ENCODE measurements at regions of chr3 and their contacts with region 1.

Region 1: GRCh38 chr3:187319699-187320302 is 28.3 kb upstream of the MASP1 start:
- DNase-seq: peak; percentile 8 to 66 (median 39)
- ATAC-seq: peak; percentile 84
- H3K4me3 ChIP-seq: no peak overlapping the region
- H3K4me3 Mint-ChIP-seq: no peak overlapping the region
- H3K27ac ChIP-seq: no peak overlapping the region
- H3K27ac Mint-ChIP-seq: no peak overlapping the region
- H3K4me1 ChIP-seq: peaks cover 6% of the 10 kb centered on the region
- H3K4me1 Mint-ChIP-seq: peaks cover 13% of the 10 kb centered on the region
- H3K27me3 ChIP-seq: peaks cover 4 to 5% of the 10 kb centered on the region in 2 experiments
- H3K27me3 Mint-ChIP-seq: peaks cover 43% of the 10 kb centered on the region
- CTCF ChIP-seq: peak; percentile 54

Region 2: GRCh38 chr3:187336322-187336721 is 16.5 kb after region 1 on chr3:
- CTCF ChIA-PET with region 1: interaction called, 45 read pairs
- POLR2A ChIA-PET with region 1: no interaction called
- intact Hi-C with region 1: no loop called
- DNase-seq: no peak
- ATAC-seq: no peak
- H3K4me3 ChIP-seq: no peak overlapping the region
- H3K4me3 Mint-ChIP-seq: no peak overlapping the region
- H3K27ac ChIP-seq: no peak overlapping the region
- H3K27ac Mint-ChIP-seq: no peak overlapping the region
- H3K4me1 ChIP-seq: no peaks in the 10 kb centered on the region
- H3K4me1 Mint-ChIP-seq: no peaks in the 10 kb centered on the region
- H3K27me3 ChIP-seq: no peaks in the 10 kb centered on the region
- H3K27me3 Mint-ChIP-seq: peaks cover 13% of the 10 kb centered on the region
- CTCF ChIP-seq: no peak

Region 3: DNA sequence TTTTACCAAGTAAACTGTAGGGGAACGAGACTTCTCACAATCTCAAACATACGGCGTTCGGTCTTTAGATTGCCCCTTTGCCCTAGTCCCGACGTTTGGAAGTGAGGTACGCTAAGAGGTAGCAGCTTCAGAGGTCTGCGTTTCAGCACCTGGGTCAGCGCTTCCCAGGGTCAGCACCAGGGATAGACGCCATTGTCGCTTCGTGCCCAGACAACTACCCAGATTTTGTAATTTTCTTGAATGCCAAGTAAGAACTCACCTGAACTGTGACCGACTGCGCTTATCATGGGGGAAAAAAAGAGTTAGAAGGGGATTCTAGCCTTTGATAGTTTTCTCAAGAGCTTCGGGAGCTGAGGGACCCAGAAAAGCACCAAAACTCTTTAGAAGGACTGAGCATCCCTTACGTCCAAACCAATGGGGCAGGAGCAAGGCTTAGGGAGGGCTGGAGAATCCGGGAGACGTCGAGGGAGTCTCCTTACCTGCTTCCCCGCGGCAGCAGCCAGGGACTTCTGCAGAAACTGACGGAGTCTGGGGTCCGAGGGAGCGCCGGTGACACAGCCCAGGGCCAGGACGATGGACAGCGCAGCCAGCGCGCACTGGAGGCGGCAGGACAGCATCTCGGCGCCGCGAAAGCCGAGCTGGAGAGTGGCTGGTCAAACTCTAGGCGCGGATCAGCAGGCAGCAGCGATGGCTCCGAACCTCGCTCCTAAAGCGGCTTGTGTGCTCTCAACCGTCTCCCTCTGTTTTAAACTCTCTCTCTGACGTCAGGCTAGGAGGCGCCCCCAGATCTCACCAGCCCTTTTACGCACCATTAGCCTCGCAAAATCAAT is 350.1 kb after region 1 on chr3 and contains the start of gene SST:
- CTCF ChIA-PET with region 1: interaction called, 421 read pairs
- POLR2A ChIA-PET with region 1: no interaction called
- intact Hi-C with region 1: no loop called
- DNase-seq: peak in 2 of 9 experiments; percentile 6
- ATAC-seq: no peak
- H3K4me3 ChIP-seq: no peak within 1 kb of the TSS
- H3K4me3 Mint-ChIP-seq: no peak within 1 kb of the TSS
- H3K27ac ChIP-seq: no peak within 1 kb of the TSS
- H3K27ac Mint-ChIP-seq: no peak within 1 kb of the TSS
- H3K4me1 ChIP-seq: no peaks in the 10 kb centered on the region
- H3K4me1 Mint-ChIP-seq: no peaks in the 10 kb centered on the region
- H3K27me3 ChIP-seq: peaks cover 8 to 13% of the 10 kb centered on the region in 2 experiments
- H3K27me3 Mint-ChIP-seq: peaks cover 55% of the 10 kb centered on the region
- CTCF ChIP-seq: no peak
- total RNA-seq, gene SST: not detected

Region 4: DNA sequence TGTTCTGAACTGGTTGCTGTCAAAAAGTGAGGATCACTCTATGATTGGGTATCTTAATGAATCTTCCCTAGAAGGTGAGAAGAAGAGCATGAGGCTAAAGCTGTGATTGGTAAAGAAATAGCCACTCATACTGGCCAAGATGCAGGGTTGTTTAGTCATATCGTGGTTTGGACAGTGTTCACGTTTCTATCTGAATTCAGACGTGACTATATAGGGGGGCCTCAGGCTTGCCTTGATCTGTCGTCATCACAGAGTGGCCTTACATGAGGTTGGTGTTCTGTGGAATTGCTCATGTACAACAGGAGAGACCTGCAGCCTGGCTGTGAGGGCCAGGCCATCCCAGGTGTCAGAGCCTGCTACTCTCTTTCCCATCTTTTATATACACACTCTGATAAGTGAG is 370.2 kb after region 1 on chr3:
- CTCF ChIA-PET with region 1: interaction called, 421 read pairs
- POLR2A ChIA-PET with region 1: no interaction called
- intact Hi-C with region 1: no loop called
- DNase-seq: no peak
- ATAC-seq: no peak
- H3K4me3 ChIP-seq: no peak overlapping the region
- H3K4me3 Mint-ChIP-seq: no peak overlapping the region
- H3K27ac ChIP-seq: no peak overlapping the region
- H3K27ac Mint-ChIP-seq: no peak overlapping the region
- H3K4me1 ChIP-seq: no peaks in the 10 kb centered on the region
- H3K4me1 Mint-ChIP-seq: no peaks in the 10 kb centered on the region
- H3K27me3 ChIP-seq: no peaks in the 10 kb centered on the region
- H3K27me3 Mint-ChIP-seq: peaks cover 34% of the 10 kb centered on the region
- CTCF ChIP-seq: no peak

Region 5: DNA sequence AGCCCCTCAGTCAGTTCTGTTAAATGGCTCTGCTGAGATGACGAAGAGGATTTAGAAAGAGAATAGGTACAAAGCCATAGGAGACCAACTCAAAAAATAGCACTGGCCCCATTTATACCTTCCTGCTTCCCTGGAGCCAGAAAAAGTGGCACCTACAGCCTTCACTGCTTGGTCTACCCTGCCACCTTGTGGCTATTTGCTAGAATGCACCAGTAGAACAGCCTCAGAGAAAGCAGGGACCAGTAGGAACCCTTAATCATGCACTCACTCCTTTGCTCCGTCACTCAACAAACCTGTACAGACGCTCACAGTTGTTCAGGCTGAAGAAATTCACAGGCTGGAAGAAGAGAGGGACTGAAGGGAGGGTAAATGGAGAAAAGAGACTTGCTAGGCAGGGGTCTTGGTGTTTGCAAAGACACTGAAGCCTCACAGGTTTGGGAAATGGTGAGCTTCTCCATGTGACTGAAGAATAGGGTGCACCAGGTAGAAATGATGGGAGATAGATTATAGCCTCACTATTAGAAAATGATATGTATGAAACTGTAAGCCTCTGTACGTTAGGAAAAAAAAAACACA is 394.7 kb after region 1 on chr3:
- CTCF ChIA-PET with region 1: interaction called, 184 read pairs
- POLR2A ChIA-PET with region 1: no interaction called
- intact Hi-C with region 1: loop called (anchors 1 kb)
- DNase-seq: peak; percentile 43 to 82 (median 67)
- ATAC-seq: peak; percentile 92
- H3K4me3 ChIP-seq: no peak overlapping the region
- H3K4me3 Mint-ChIP-seq: no peak overlapping the region
- H3K27ac ChIP-seq: no peak overlapping the region
- H3K27ac Mint-ChIP-seq: no peak overlapping the region
- H3K4me1 ChIP-seq: no peaks in the 10 kb centered on the region
- H3K4me1 Mint-ChIP-seq: peaks cover 12% of the 10 kb centered on the region
- H3K27me3 ChIP-seq: no peaks in the 10 kb centered on the region
- H3K27me3 Mint-ChIP-seq: no peaks in the 10 kb centered on the region
- CTCF ChIP-seq: peak; percentile 98

Region 6: DNA sequence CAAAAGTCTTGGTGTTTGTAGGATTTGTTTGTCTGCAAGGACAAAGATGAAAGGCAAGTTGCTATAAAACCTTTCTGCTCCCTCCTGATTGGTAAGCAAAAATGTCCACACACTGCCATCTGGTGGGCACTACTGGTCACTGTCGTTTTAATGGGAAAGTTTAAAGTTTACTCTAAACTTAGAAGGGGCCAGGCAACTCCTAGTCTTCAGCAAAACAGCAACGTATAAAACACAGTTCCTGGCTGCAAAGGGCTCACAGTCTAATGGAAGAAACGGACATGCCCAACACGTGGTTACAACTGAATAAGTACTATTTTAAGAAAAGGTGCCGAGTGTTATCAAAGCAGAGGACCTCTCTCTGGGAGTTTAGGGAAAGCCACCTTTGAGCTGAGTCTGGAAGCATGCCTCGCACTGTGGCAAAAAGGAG is 1828.3 kb after region 1 on chr3:
- CTCF ChIA-PET with region 1: interaction called, 4 read pairs
- POLR2A ChIA-PET with region 1: no interaction called
- intact Hi-C with region 1: loop called (anchors 5 kb)
- DNase-seq: peak; percentile 44 to 82 (median 71)
- ATAC-seq: peak; percentile 74
- H3K4me3 ChIP-seq: no peak overlapping the region
- H3K4me3 Mint-ChIP-seq: no peak overlapping the region
- H3K27ac ChIP-seq: no peak overlapping the region
- H3K27ac Mint-ChIP-seq: no peak overlapping the region
- H3K4me1 ChIP-seq: peaks cover 14% of the 10 kb centered on the region
- H3K4me1 Mint-ChIP-seq: peaks cover 17% of the 10 kb centered on the region
- H3K27me3 ChIP-seq: no peaks in the 10 kb centered on the region
- H3K27me3 Mint-ChIP-seq: no peaks in the 10 kb centered on the region
- CTCF ChIP-seq: peak; percentile 74